ENCODE measurements at regions of chr11 and their contacts with region 1.

Region 1: DNA sequence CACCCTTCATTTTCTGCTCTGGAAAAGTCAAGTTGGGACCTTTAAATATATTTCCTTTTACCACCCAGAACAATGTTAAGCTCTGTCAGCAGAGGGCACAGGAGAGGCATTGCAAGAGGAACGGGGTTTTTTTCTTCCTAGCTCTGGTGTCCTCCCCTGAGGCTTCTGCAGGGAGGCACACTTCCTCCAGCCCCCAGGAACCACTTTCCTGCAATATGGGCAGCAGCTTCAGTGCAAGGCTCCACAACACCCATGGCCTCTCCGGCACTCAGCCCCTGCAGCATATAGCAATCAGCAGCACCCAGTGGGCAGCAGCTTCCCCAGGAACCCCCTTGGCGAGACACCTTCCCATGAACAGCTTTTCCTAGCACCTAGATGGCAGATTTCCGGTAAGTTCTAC is 101.4 kb downstream of the SYT9 start:
- DNase-seq: peak; percentile 22
- ATAC-seq: peak; percentile 85
- H3K4me3 ChIP-seq: no peak overlapping the region
- H3K27ac ChIP-seq: no peak overlapping the region
- H3K4me1 ChIP-seq: no peaks in the 10 kb centered on the region
- H3K27me3 ChIP-seq: peaks cover 55% of the 10 kb centered on the region
- CTCF ChIP-seq: peak; percentile 49 to 63 (median 57); a peak in 5 of 6 replicates
- POLR2A ChIP-seq: no peak
- RAD21 ChIP-seq: peak; percentile 53

Region 2: GRCh38 chr11:7442588-7443215 is 89.6 kb after region 1 on chr11:
- CTCF ChIA-PET with region 1: interaction called, 10 read pairs
- POLR2A ChIA-PET with region 1: no interaction called
- RAD21 ChIA-PET with region 1: no interaction called
- intact Hi-C with region 1: loop called (anchors 1 kb)
- DNase-seq: peak; percentile 38
- ATAC-seq: peak; percentile 90
- H3K4me3 ChIP-seq: no peak overlapping the region
- H3K27ac ChIP-seq: no peak overlapping the region
- H3K4me1 ChIP-seq: no peaks in the 10 kb centered on the region
- H3K27me3 ChIP-seq: peaks cover 73% of the 10 kb centered on the region
- CTCF ChIP-seq: peak; percentile 53 to 86 (median 85); a peak in 5 of 6 replicates
- POLR2A ChIP-seq: no peak
- RAD21 ChIP-seq: peak; percentile 78

Region 3: DNA sequence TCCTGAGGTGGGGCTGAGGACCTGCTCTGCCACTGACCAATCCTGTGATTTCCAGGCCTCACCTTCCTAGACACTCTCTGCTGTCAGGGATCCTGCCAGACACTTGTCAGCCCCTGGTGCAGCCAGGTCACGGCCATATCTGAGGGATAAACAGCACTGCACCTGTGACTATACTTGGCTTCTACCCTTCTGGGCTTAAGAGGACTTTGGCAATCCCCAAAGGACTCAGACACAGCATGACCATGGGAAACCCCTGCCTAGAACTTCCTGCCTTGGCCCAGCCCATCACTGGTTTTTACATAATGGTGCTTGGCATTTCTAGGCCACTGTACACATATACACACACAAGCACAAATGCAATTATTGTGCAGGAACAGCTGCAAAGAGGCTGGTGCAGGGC is 120.6 kb after region 1 on chr11:
- CTCF ChIA-PET with region 1: no interaction called
- POLR2A ChIA-PET with region 1: no interaction called
- RAD21 ChIA-PET with region 1: no interaction called
- intact Hi-C with region 1: no loop called
- DNase-seq: no peak
- ATAC-seq: no peak
- H3K4me3 ChIP-seq: no peak overlapping the region
- H3K27ac ChIP-seq: no peak overlapping the region
- H3K4me1 ChIP-seq: no peaks in the 10 kb centered on the region
- H3K27me3 ChIP-seq: peaks cover 45% of the 10 kb centered on the region
- CTCF ChIP-seq: no peak
- POLR2A ChIP-seq: no peak
- RAD21 ChIP-seq: no peak

Region 4: DNA sequence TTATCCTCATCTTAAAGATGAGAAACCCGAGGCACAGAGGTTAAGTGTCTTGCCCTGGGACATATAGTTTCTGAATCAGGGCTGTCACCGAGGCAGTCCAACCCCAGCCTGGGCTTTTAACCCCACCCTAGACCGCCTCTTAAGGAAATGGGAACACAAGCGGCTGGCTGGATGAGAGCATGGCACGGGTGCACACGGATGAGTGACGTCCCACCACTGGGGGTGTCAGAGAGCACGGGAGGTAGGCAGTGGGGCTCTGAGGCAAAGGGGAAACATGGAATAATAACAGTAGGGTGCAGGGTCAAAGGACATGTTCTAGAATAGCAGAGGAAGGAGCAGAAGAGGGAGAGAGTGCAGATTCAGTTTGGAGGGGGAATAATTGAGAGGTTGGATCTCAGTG is 183.0 kb after region 1 on chr11:
- CTCF ChIA-PET with region 1: no interaction called
- POLR2A ChIA-PET with region 1: no interaction called
- RAD21 ChIA-PET with region 1: no interaction called
- intact Hi-C with region 1: no loop called
- DNase-seq: no peak
- ATAC-seq: peak; percentile 95
- H3K4me3 ChIP-seq: no peak overlapping the region
- H3K27ac ChIP-seq: no peak overlapping the region
- H3K4me1 ChIP-seq: no peaks in the 10 kb centered on the region
- H3K27me3 ChIP-seq: peaks cover 7% of the 10 kb centered on the region; the same call in 1 of the 2 replicates
- CTCF ChIP-seq: peak in 2 of 3 experiments; percentile 48 to 52; a peak in 4 of 6 replicates
- POLR2A ChIP-seq: no peak
- RAD21 ChIP-seq: no peak

Region 5: DNA sequence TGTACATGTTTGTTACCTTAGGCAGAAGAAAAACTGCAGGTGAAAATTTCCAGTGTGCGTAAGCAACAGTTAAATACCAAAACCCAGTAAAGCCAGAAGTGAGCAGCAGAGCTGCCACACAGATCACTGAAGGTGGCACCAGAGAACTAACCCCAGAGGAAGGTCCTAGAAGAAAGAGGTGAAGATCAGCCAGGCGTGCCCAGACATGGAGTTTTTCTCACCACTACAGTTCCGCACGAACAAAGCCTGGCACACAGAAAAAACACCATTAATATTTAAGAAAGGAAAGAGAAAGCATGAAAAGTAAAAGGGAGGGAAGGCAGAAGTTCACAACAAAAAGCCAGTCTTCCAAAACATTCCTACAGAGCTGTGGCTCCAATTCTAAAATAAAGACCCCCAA is 1180.2 kb after region 1 on chr11:
- CTCF ChIA-PET with region 1: no interaction called
- POLR2A ChIA-PET with region 1: no interaction called
- RAD21 ChIA-PET with region 1: no interaction called
- intact Hi-C with region 1: no loop called
- DNase-seq: no peak
- ATAC-seq: no peak
- H3K4me3 ChIP-seq: no peak overlapping the region
- H3K27ac ChIP-seq: no peak overlapping the region
- H3K4me1 ChIP-seq: no peaks in the 10 kb centered on the region
- H3K27me3 ChIP-seq: no peaks in the 10 kb centered on the region
- CTCF ChIP-seq: no peak
- POLR2A ChIP-seq: no peak
- RAD21 ChIP-seq: no peak